Heart left ventricle (tissue), 16 donors: ENCODE measurements at regions of chr2 and their contacts with region 1.

Region 1: GRCh38 chr2:235287375-235287733 is 206.5 kb upstream of the AGAP1 start:
- DNase-seq: peak in 1 of 5 donors; percentile 56
- ATAC-seq: peak in 2 of 4 donors; percentile 74 to 75
- H3K4me3 ChIP-seq: no peak overlapping the region
- H3K27ac ChIP-seq: peak overlapping the region in 3 of 12 donors; percentile 8 to 57 (median 18)
- H3K4me1 ChIP-seq: peaks cover 0 to 7% (median 0%) of the 10 kb centered on the region in 12 donors
- H3K27me3 ChIP-seq: peaks cover 0 to 19% (median 0%) of the 10 kb centered on the region in 9 donors
- CTCF ChIP-seq: no peak
- POLR2A ChIP-seq: no peak

Region 2: GRCh38 chr2:234932591-234933168 is 354.7 kb before region 1 on chr2:
- intact Hi-C with region 1: loop called in 1 of 10 experiments (anchors 5 kb)
- DNase-seq: no peak
- ATAC-seq: peak in 1 of 4 donors; percentile 24
- H3K4me3 ChIP-seq: no peak overlapping the region
- H3K27ac ChIP-seq: no peak overlapping the region
- H3K4me1 ChIP-seq: no peaks in the 10 kb centered on the region
- H3K27me3 ChIP-seq: no peaks in the 10 kb centered on the region
- CTCF ChIP-seq: no peak
- POLR2A ChIP-seq: no peak

Region 3: GRCh38 chr2:234981197-234982117 is 305.9 kb before region 1 on chr2:
- intact Hi-C with region 1: no loop called
- DNase-seq: peak; percentile 68 to 85 (median 79)
- ATAC-seq: peak; percentile 84 to 95 (median 92)
- H3K4me3 ChIP-seq: peak overlapping the region in 10 of 12 donors; percentile 17 to 49 (median 30)
- H3K27ac ChIP-seq: peak overlapping the region; percentile 26 to 86 (median 72)
- H3K4me1 ChIP-seq: peaks cover 0 to 88% (median 61%) of the 10 kb centered on the region in 12 donors
- H3K27me3 ChIP-seq: no peaks in the 10 kb centered on the region
- CTCF ChIP-seq: peak in 2 of 12 donors; percentile 11 to 29
- POLR2A ChIP-seq: no peak

Region 4: DNA sequence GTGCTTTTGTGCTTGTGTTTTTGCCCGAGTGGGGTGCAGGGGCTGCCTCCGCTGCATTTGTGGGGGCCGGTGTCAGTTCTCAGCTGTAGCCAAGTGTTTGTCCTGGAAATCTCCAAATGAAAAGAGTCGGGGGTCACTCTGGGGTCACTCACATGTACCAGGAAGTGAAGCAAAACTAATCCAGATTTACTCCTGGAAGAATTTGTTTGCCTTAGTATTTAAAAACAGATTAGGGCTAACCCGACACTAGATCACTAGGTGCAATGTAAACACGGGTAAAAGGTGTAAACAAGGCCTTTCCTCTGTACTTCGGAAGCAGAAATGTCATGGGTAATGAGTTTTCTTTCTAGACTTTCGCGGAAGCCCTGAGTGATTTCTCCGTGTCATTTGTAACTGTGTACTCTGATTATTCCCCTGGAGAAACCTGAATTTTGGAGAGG is 830.5 kb after region 1 on chr2:
- intact Hi-C with region 1: no loop called
- DNase-seq: no peak
- ATAC-seq: no peak
- H3K4me3 ChIP-seq: no peak overlapping the region
- H3K27ac ChIP-seq: no peak overlapping the region
- H3K4me1 ChIP-seq: no peaks in the 10 kb centered on the region
- H3K27me3 ChIP-seq: no peaks in the 10 kb centered on the region
- CTCF ChIP-seq: no peak
- POLR2A ChIP-seq: no peak